Activated CD4-positive, alpha-beta T cell treated with anti-CD3 and anti-CD28 coated beads, Interleukin-2, amount 10 ng/mL, durations not matched to agents 24 days and 14 days (primary cell): ENCODE measurements at regions of chr3 and their contacts with region 1.

Region 1: GRCh38 chr3:32401556-32402081 is 10.0 kb downstream of the CMTM7 start:
- DNase-seq: peak; percentile 90
- H3K4me3 Mint-ChIP-seq: peak overlapping the region; percentile 92
- H3K27ac Mint-ChIP-seq: peak overlapping the region; percentile 99
- H3K4me1 Mint-ChIP-seq: peaks cover 59% of the 10 kb centered on the region
- H3K27me3 Mint-ChIP-seq: no peaks in the 10 kb centered on the region

Region 2: DNA sequence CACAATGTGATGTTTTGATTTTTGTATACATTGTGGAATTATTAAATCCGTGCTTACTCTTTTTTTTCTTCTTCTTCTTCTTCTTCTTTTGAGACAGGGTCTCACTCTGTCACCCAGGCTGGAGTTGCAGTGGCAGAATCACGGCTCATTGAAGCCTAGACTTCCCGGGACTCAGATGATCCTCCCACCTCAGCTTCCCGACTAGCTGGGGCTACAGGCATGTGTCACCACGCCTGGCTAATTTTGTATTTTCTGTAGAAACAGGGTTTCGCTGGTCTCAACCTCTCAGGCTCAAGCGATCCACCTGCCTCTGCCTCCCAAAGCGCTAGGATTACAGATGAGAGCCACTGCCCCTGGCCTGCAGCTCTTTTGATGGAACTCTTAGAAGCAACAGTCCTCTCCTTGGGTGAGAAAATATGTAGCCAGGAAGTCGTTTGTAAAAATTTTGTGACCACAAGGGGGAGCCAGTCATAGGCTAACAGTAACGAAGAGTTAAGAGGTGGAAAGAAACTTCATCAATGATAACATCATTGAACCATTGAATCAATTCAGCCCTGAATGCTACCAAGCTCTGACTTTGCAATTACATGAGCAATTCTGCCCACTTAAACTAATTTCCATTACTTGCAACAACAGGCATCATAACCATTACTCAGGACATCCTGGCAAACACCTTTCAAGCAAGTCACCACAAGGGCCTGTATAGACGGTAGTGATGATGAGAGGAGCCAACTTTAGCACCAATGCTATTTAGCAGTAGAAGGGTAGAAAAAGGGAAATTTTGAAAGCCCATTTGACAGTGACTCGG is 26.6 kb before region 1 on chr3:
- intact Hi-C with region 1: loop called (anchors 1 kb)
- DNase-seq: peak; percentile 93
- H3K4me3 Mint-ChIP-seq: no peak overlapping the region
- H3K27ac Mint-ChIP-seq: peak overlapping the region; percentile 60
- H3K4me1 Mint-ChIP-seq: peaks cover 24% of the 10 kb centered on the region
- H3K27me3 Mint-ChIP-seq: peaks cover 8% of the 10 kb centered on the region

Region 3: DNA sequence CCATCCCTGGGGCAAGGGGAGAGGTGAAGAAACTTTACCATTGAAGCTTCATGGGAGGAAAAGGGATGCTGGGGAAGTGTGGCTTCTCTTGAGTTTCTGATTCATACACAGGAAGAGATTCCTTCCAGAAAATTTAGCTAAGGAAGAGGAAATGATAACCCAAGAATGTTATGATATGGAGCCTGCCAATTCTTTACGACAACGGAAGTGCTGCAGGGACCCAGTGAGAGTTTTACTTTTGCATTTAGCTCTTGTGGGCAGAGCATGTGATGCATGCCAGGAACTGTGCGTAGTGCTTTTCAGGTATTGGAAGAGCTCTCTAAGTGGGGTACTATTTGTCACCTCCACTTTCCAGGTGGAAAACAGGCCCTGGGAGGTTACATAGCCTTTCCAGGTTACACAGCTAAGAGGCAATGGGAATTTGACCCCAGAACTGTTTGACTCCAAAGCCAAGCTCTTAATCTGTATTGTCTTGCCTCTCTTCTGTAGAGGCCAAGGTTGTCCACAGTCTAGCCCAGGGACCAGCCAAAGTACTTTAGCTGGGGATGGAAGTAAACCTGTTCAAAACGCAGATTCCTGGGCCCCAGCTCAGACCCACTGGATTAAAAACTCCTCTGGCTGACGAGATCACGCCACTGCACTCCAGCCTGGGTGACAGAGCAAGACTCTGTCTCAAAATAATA is 13.0 kb after region 1 on chr3:
- intact Hi-C with region 1: loop called (anchors 1 kb)
- DNase-seq: peak; percentile 88
- H3K4me3 Mint-ChIP-seq: peak overlapping the region; percentile 66
- H3K27ac Mint-ChIP-seq: peak overlapping the region; percentile 88
- H3K4me1 Mint-ChIP-seq: peaks cover 58% of the 10 kb centered on the region
- H3K27me3 Mint-ChIP-seq: no peaks in the 10 kb centered on the region

Region 4: GRCh38 chr3:32467333-32468070 is 65.9 kb after region 1 on chr3:
- intact Hi-C with region 1: loop called (anchors 2 kb)
- DNase-seq: peak; percentile 94
- H3K4me3 Mint-ChIP-seq: no peak overlapping the region
- H3K27ac Mint-ChIP-seq: no peak overlapping the region
- H3K4me1 Mint-ChIP-seq: peaks cover 28% of the 10 kb centered on the region
- H3K27me3 Mint-ChIP-seq: no peaks in the 10 kb centered on the region